Pancreas (tissue), 10 donors: ENCODE measurements at regions of chr19 and their contacts with region 1.

Region 1: DNA sequence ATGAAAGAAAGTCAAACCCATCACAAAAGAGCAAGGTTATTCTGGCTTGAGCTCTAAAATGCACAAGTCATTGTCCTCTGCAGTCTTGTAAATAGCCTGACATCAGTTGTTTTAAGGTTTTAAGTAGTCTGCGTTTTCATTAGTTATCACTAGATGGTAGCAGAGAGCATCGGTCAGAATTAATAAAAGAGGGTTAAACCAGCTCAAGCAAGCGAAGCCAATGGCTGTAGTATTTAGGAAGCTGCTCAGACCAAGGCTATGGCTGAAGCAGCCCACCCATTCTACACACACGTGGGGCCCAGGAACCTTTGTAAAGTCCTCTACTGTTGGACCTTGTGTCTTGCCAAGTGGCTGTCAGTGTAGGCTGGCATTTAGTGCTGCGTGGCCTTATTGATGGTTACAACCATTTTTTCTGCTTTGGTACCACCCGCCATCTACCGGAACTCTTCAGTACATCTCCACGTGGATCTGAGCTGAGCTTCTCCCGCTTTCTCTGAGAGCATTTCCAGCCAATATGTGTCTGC is 13.3 kb upstream of the ZNF57 start:
- DNase-seq: peak in 1 of 6 donors; percentile 35
- ATAC-seq: peak; percentile 66 to 97 (median 90)
- H3K4me3 ChIP-seq: no peak overlapping the region
- H3K27ac ChIP-seq: no peak overlapping the region
- H3K4me1 ChIP-seq: no peaks in the 10 kb centered on the region
- H3K27me3 ChIP-seq: no peaks in the 10 kb centered on the region
- CTCF ChIP-seq: peak in 3 of 4 donors; percentile 50 to 58 (median 57)

Region 2: GRCh38 chr19:2782936-2783780 is 104.3 kb before region 1 on chr19 and contains the start of gene SGTA:
- intact Hi-C with region 1: no loop called
- DNase-seq: peak; percentile 92 to 99 (median 98)
- ATAC-seq: peak; percentile 81 to 92 (median 86)
- H3K4me3 ChIP-seq: peak within 1 kb of the TSS; percentile 73 to 100 (median 94)
- H3K27ac ChIP-seq: peak within 1 kb of the TSS; percentile 73 to 87 (median 79)
- H3K4me1 ChIP-seq: peaks cover 5 to 27% (median 21%) of the 10 kb centered on the region in 3 donors
- H3K27me3 ChIP-seq: no peaks in the 10 kb centered on the region
- CTCF ChIP-seq: peak in 3 of 4 donors; percentile 15 to 43 (median 23)
- total RNA-seq, gene SGTA: 19.4 to 31.5 (median 23.5) TPM

Region 3: GRCh38 chr19:3132971-3133792 is 245.7 kb after region 1 on chr19:
- intact Hi-C with region 1: no loop called
- DNase-seq: peak in 2 of 6 donors; percentile 50 to 54
- ATAC-seq: peak in 3 of 4 donors; percentile 68 to 81 (median 75)
- H3K4me3 ChIP-seq: no peak overlapping the region
- H3K27ac ChIP-seq: peak overlapping the region in 3 of 4 donors; percentile 10 to 62 (median 59)
- H3K4me1 ChIP-seq: no peaks in the 10 kb centered on the region
- H3K27me3 ChIP-seq: no peaks in the 10 kb centered on the region
- CTCF ChIP-seq: no peak

Region 4: GRCh38 chr19:3154957-3155736 is 267.7 kb after region 1 on chr19:
- intact Hi-C with region 1: loop called in 2 of 3 experiments (anchors 10 kb)
- DNase-seq: peak in 2 of 6 donors; percentile 36 to 47
- ATAC-seq: peak in 3 of 4 donors; percentile 59 to 78 (median 74)
- H3K4me3 ChIP-seq: no peak overlapping the region
- H3K27ac ChIP-seq: peak overlapping the region in 1 of 4 donors; percentile 33
- H3K4me1 ChIP-seq: no peaks in the 10 kb centered on the region
- H3K27me3 ChIP-seq: no peaks in the 10 kb centered on the region
- CTCF ChIP-seq: no peak